Left cardiac atrium (tissue), 4 donors: ENCODE measurements at regions of chrX and their contacts with region 1.

Region 1: DNA sequence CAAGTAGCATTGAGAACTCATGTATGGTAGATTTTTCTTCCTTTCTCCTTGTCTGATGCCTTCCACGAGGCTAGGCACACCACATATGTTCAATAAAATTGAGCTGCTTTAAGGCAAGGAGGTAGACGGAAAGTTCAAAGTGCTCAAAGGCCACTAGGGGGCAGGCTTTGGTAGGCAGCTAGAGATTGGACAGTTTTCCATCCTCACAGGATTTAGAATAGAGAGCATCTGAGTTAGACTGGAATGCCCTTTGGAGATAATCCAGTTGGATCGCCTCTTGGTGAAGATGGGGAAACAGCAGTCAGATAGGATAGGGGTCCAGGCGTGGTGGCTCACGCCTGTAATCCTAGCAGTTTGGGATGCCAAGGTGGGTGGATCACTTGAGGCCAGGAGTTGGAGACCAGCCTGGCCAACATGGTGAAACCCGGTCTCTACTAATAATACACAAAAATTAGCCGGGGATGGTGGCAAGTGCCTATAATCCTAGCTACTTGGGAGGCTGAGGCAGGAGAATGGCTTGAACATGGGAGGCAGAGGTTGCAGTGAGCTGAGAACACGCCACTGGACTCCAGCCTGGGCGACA is 30.4 kb downstream of the ELF4 start:
- DNase-seq: peak; percentile 58
- ATAC-seq: peak; percentile 40 to 52

Region 2: GRCh38 chrX:129963729-129964128 is 116.2 kb before region 1 on chrX:
- intact Hi-C with region 1: no loop called
- DNase-seq: no peak
- ATAC-seq: no peak

Region 3: GRCh38 chrX:130120746-130121504 is 41.0 kb after region 1 on chrX:
- intact Hi-C with region 1: loop called (anchors 5 to 10 kb)
- DNase-seq: peak; percentile 80
- ATAC-seq: peak; percentile 81

Region 4: GRCh38 chrX:130190801-130191200 is 110.9 kb after region 1 on chrX:
- intact Hi-C with region 1: loop called (anchors 2 to 5 kb)
- DNase-seq: no peak
- ATAC-seq: no peak

Region 5: GRCh38 chrX:130196466-130196865 is 116.6 kb after region 1 on chrX:
- intact Hi-C with region 1: loop called (anchors 2 to 5 kb)
- DNase-seq: no peak
- ATAC-seq: no peak